Activated CD4-positive, alpha-beta T cell treated with anti-CD3 and anti-CD28 coated beads for 36 hours (primary cell): ENCODE measurements at regions of chr3 and their contacts with region 1.

Region 1: GRCh38 chr3:189013224-189013888 is 158.4 kb upstream of the TPRG1 start:
- DNase-seq: no peak
- ATAC-seq: peak; percentile 74
- H3K4me3 Mint-ChIP-seq: no peak overlapping the region
- H3K27ac Mint-ChIP-seq: no peak overlapping the region
- H3K4me1 Mint-ChIP-seq: peaks cover 20% of the 10 kb centered on the region
- H3K27me3 Mint-ChIP-seq: peaks cover 12% of the 10 kb centered on the region

Region 2: DNA sequence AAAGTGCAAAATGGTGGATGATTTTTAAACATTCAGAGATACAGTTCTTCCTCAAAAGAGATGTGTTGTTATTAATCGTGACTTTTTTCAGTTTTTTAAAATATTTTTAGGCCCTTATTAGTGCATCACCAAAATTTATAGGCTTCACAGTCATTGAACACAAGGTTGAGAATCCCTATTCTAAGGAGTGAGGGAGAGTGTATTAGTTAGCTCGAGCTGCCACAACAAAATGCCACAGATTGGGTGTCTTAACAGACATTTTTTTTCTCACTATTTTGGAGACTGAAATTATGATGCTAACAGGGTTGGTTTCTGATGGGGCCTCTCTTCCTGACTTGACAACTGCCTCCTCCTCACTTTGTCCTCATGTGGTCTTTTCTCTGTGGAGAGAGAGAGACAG is 12.5 kb after region 1 on chr3:
- CTCF ChIA-PET with region 1: no interaction called
- POLR2A ChIA-PET with region 1: no interaction called
- intact Hi-C with region 1: loop called in 1 of 2 experiments (anchors 1 kb)
- DNase-seq: no peak
- ATAC-seq: no peak
- H3K4me3 Mint-ChIP-seq: no peak overlapping the region
- H3K27ac Mint-ChIP-seq: no peak overlapping the region
- H3K4me1 Mint-ChIP-seq: no peaks in the 10 kb centered on the region
- H3K27me3 Mint-ChIP-seq: peaks cover 13% of the 10 kb centered on the region